ENCODE measurements at regions of chr12 and their contacts with region 1.

Region 1: GRCh38 chr12:11719678-11720099 is 70.2 kb downstream of the ETV6 start:
- DNase-seq: peak; percentile 65 to 82 (median 67)
- ATAC-seq: peak; percentile 35 to 90 (median 82)
- H3K4me3 ChIP-seq: no peak overlapping the region
- H3K27ac ChIP-seq: peak overlapping the region in 7 of 12 donors; percentile 22 to 80 (median 44)
- H3K4me1 ChIP-seq: peaks cover 0 to 81% (median 37%) of the 10 kb centered on the region in 12 donors
- H3K27me3 ChIP-seq: no peaks in the 10 kb centered on the region
- CTCF ChIP-seq: no peak
- POLR2A ChIP-seq: no peak

Region 2: DNA sequence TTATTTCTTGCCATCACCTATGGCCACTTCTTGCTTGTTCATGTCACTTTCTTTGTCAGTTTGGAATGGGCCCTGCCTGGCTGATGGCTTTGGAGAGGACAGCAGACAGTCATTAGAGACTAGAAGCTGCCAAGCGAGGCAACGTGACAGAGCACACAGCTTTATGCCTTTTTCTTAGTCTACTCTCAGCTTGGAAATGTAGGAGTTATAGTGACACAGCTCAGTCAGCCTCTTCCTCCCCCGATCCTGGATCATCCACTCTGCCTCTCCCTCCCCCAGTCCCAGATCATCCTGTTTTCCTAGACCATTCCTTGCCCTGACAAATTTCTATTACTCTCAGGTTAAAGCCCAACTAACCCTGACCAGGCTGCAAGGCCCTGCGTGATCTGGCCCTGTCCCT is 43.6 kb before region 1 on chr12:
- intact Hi-C with region 1: loop called in 1 of 10 experiments (anchors 5 kb)
- DNase-seq: no peak
- ATAC-seq: no peak
- H3K4me3 ChIP-seq: no peak overlapping the region
- H3K27ac ChIP-seq: peak overlapping the region in 5 of 12 donors; percentile 26 to 65 (median 35)
- H3K4me1 ChIP-seq: peaks cover 4 to 90% (median 74%) of the 10 kb centered on the region in 12 donors
- H3K27me3 ChIP-seq: no peaks in the 10 kb centered on the region
- CTCF ChIP-seq: no peak
- POLR2A ChIP-seq: no peak

Region 3: GRCh38 chr12:11705010-11705409 is 14.7 kb before region 1 on chr12:
- intact Hi-C with region 1: loop called in 1 of 10 experiments (anchors 2 kb)
- DNase-seq: no peak
- ATAC-seq: peak in 3 of 4 donors; percentile 28 to 58 (median 55)
- H3K4me3 ChIP-seq: no peak overlapping the region
- H3K27ac ChIP-seq: peak overlapping the region in 8 of 12 donors; percentile 6 to 79 (median 48)
- H3K4me1 ChIP-seq: peaks cover 0 to 84% (median 45%) of the 10 kb centered on the region in 12 donors
- H3K27me3 ChIP-seq: no peaks in the 10 kb centered on the region
- CTCF ChIP-seq: no peak
- POLR2A ChIP-seq: no peak

Region 4: DNA sequence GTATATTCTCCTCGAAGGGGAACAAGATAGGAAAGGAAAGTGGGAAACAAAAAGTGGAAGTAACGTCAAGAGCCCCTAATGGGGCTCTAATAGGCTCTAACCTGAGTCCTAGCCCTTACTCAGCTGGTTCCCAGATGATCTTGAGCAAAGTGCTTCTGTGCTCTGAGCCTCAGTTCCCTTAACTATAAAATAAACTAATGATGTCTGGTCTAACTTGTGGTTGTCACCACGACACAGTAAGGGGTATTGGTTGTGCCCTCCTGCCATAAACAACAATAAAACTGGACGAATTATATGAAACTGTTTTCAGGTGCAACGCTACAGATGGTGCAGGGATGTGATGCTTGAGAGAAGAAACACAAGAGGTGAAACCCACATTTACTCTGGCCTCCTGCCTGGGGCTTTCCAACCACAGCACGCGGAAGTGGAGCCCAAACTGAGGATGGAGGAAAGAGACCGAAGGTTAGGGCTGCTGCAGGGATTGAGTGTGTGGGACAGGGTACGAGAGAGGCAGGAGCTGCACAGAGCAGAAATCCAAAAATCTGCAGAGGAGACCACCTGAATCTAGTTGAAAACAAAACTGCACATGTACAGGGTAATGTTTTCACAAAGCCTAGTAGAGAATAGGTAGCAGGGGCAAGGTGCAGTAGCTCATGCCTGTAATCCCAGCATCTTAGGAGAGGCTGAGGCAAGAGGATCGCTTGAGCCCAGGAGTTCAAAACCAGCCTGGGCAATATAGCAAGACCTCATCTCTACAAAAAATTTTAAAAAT is 305.4 kb after region 1 on chr12:
- intact Hi-C with region 1: loop called in 1 of 10 experiments (anchors 10 kb)
- DNase-seq: no peak
- ATAC-seq: no peak
- H3K4me3 ChIP-seq: no peak overlapping the region
- H3K27ac ChIP-seq: peak overlapping the region in 1 of 12 donors; percentile 11
- H3K4me1 ChIP-seq: peaks cover 0 to 14% (median 0%) of the 10 kb centered on the region in 12 donors
- H3K27me3 ChIP-seq: no peaks in the 10 kb centered on the region
- CTCF ChIP-seq: no peak
- POLR2A ChIP-seq: no peak